GM13977 (cell line): ENCODE measurements at regions of chr9 and their contacts with region 1.

Region 1: DNA sequence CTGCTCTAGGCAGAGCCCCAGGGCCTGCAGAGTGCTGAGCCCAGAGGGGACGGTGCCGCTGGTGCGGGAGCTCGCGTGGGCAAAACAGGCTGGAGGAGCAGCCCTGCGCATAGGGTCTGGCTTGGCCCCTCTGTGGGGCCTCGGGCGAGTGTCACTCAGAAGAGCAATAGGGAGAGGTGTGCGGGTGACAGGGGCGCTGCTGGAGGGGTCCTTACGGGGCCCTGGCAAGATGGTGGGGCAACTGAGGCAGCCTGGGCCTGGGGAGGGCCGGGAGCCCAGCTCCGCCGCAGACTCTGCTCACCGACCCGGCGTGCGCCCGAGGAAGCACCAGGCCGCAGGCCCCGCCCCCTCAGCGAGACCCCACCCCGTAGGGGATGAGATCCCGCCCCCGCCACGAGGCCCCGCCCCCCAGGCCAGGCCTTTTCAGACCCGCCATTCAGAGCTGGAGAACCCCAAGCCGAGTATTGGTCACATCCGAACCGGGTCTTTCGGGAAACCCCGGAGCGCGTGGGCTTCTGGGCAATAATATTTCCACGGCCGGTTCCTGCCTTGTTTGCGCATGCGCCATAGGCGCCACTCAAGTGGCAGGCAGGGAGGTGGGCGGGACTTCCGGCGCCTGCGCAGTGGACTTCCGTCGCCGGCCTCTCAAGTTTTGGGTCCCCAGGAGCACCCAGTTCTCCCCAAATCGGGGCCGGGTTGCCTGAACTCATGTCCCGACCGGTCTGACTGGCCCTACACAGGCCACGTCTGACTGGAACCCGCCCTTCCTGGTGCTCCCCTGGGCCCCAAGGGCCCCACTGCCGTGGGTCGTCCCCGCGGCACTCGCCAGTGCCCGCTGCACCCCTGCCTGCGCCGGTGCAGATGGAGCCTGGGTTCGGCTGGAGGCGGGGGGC is 1.3 kb upstream of the RNF208 start:
- DNase-seq: peak; percentile 100
- CTCF ChIP-seq: no peak

Region 2: DNA sequence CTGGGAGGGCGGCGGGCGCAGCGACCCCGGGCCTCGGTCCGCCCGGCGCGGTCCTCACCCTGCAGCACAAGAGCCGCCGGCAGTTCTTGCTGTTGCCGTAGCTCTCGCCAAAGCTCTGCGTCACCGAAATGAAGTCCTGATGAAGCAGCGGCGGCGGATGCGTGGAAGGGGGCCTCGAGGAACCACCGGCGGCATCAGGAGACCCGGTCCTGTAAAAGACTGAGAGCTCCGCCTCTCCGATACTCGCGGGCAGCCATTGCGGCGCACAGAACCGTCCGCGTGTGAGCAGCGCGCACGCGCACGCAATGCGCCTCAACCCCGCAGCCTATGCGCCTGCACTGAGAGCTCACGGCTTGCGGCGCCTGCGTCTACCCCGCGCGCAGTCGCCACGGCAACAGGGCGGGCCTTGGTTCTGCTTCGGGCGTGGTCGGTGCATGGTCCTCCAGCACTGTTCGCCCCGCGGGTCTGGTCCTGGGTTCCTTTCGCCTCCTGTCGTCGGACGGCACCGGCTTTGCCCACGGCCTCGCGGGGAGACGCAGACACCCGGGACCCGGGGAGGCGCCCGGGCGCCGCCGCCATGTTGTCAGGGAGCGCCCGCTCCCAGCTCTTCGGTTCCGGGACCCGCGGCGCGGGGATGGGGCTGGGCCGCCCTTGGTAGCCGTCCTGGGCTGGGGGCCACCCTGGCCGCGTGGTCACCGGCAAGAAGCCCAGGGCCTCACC is 93.7 kb before region 1 on chr9:
- in situ Hi-C with region 1: loop called (anchors 10 kb)
- DNase-seq: peak; percentile 98
- CTCF ChIP-seq: no peak

Region 3: DNA sequence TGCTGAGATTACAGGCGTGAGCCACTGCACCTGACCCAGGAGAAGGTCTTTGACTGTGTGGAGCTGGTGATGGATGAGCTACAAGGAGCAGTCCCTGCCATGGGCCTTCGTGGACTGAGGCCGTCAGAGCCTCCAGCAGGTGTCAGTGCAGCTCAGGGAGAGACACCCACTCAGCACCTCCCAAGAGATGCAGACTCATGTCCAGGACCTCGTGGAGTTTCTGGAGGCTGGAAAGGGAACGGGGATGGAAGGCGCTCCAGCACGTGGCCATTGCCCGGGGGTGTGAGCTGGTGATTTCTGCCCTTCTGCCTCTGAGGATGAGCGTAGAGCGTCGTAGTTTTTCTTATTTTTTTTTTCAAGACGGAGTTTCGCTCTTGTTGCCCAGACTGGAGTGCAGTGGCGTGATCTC is 63.7 kb after region 1 on chr9:
- in situ Hi-C with region 1: no loop called
- DNase-seq: peak; percentile 81
- CTCF ChIP-seq: peak; percentile 55